MCF 10A (cell line): ENCODE measurements at regions of chr11 and their contacts with region 1.

Region 1: DNA sequence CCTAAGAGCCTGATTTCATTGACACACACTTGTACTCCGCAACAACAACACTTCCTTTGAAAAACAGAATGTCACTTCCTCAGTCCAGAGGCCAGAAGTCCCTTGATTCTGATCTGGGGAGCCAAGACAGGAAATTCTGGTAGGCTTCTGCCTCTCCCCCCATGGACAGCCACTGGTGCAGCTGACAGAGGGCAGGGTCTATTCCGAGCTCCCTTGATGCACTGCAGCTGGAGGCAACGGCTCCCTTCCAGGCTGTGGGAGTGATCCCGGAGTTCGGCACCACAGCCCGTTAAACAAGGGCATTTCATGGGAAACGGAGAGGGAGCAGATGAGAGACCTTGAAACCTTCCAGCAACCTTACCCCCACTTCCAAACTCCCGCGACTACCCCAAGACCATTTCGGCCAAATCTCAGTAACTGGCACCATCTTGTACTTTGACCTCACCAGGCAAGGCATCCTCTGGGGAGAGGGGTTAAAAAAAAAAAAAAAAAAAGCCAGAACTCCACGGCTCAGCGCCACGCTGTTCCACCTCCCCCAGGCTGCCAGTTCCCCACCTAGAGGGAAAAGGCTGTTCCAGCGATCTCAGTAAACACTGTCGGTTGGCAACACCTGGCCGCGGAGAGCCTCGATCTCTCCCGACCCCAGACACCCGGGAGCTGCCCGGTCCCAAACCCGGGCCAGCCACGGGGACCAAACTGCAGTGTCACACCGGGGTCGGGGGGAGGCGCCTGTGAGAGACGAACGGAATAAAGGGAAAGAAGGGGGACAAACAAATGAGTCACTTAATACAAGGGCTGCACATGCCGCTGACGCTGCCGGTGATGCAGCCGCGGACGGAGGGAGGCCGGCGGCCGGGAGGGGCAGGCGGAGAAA is 1.1 kb downstream of the GAB2 start:
- DNase-seq: peak; percentile 66
- H3K4me3 Mint-ChIP-seq: peak overlapping the region; percentile 78
- H3K27ac Mint-ChIP-seq: peak overlapping the region; percentile 57
- H3K4me1 Mint-ChIP-seq: peaks cover 19% of the 10 kb centered on the region
- H3K27me3 Mint-ChIP-seq: no peaks in the 10 kb centered on the region
- CTCF ChIP-seq: peak; percentile 47

Region 2: DNA sequence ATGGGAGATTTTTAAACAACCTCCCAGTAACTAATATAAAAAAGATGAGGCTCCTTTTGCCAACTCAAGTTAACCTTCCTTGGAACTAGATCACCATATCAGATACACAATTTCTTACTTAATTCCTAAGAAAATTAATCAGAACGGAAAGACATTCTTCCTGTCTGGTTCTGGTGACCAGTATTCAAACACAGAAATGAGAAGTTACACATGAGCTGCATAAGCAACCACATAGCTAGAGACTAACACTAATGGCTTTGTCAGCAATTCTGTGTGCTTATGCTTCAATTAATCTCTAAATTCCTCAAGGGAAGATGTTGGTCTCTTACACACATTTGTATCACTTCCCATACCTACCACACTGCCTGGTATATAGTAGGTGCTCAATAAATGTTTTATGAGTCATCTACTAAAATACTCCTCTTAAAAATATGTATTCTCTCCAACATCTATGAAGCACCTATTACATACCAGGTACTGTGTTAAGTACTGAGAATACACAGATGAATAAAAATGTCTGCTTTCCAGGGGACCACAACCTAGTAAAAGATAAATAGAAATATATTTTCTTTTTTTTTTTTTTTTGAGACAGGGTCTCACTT is 53.4 kb before region 1 on chr11:
- CTCF ChIA-PET with region 1: no interaction called
- POLR2A ChIA-PET with region 1: no interaction called
- intact Hi-C with region 1: no loop called
- DNase-seq: no peak
- H3K4me3 Mint-ChIP-seq: no peak overlapping the region
- H3K27ac Mint-ChIP-seq: no peak overlapping the region
- H3K4me1 Mint-ChIP-seq: peaks cover 6% of the 10 kb centered on the region
- H3K27me3 Mint-ChIP-seq: no peaks in the 10 kb centered on the region
- CTCF ChIP-seq: no peak

Region 3: DNA sequence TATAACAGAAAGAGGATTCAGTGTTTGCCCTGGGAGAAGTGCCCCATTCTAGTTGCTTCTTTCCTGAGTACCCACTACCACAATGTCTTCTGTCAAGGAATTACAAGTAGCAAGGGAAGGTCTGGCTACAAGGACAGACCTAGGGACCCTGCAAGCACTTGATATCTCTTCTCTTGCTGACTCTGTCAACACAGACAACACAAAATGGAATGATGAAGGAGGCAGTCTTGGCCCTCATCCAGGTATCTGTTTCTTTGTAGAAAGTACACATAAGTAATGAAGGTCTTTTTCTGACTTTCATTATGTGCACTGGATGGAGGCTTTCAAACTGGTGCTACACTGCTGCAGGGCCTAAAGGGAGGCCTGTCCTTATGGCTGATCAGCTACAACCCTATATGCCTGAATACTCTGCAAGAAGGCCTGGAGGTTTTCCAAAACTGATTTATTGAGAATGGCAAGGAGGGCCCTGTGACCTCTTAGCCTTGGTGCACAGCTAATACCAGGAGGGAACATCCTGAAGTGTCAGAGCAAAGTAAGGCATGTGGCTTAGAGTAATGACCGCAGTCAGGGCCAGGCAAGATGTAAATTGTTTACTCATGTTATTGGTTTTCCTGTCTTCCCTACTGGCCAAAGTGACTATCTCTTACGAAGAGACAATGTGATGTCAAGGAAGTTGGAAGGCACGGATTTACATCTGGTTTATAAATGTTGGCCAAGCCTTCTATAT is 30.2 kb before region 1 on chr11:
- CTCF ChIA-PET with region 1: interaction called, 3 read pairs
- POLR2A ChIA-PET with region 1: no interaction called
- intact Hi-C with region 1: loop called (anchors 1 kb)
- DNase-seq: no peak
- H3K4me3 Mint-ChIP-seq: no peak overlapping the region
- H3K27ac Mint-ChIP-seq: no peak overlapping the region
- H3K4me1 Mint-ChIP-seq: no peaks in the 10 kb centered on the region
- H3K27me3 Mint-ChIP-seq: no peaks in the 10 kb centered on the region
- CTCF ChIP-seq: no peak

Region 4: GRCh38 chr11:78397387-78397786 is 19.2 kb before region 1 on chr11:
- CTCF ChIA-PET with region 1: no interaction called
- POLR2A ChIA-PET with region 1: no interaction called
- intact Hi-C with region 1: no loop called
- DNase-seq: no peak
- H3K4me3 Mint-ChIP-seq: no peak overlapping the region
- H3K27ac Mint-ChIP-seq: no peak overlapping the region
- H3K4me1 Mint-ChIP-seq: no peaks in the 10 kb centered on the region
- H3K27me3 Mint-ChIP-seq: no peaks in the 10 kb centered on the region
- CTCF ChIP-seq: no peak

Region 5: DNA sequence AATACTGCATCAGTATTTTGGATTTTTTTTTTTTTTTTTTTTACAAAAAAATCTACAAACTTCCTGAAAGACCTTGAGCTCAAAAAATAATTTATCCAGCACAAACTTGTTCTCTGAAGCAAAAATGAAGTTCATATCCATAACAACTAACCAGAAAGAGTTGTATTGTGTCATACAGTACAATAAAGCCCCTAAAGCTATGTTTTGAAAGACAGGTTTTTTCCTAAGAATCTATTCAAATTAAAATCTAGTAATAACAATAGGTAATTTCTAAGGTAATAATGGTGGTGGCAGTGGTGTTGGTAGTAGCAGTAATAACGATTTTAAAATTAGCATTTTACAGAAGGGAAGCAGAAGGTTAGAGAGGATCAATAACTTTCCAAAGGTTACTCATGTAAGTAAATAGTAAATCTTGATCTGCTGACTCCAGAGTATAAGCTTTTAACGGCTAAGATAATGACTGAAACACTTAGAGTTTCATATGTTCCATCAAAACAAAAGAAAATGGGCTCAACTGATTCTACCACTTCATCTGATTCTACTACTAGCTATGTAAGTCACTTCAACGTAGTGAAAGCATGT is 54.4 kb after region 1 on chr11:
- CTCF ChIA-PET with region 1: no interaction called
- POLR2A ChIA-PET with region 1: no interaction called
- intact Hi-C with region 1: no loop called
- DNase-seq: no peak
- H3K4me3 Mint-ChIP-seq: no peak overlapping the region
- H3K27ac Mint-ChIP-seq: no peak overlapping the region
- H3K4me1 Mint-ChIP-seq: no peaks in the 10 kb centered on the region
- H3K27me3 Mint-ChIP-seq: no peaks in the 10 kb centered on the region
- CTCF ChIP-seq: no peak